ENCODE measurements at regions of chr4 and their contacts with region 1.

Region 1: GRCh38 chr4:142282870-142283431 is 563.1 kb downstream of the INPP4B start:
- DNase-seq: peak; percentile 51
- H3K4me3 ChIP-seq: no peak overlapping the region
- H3K27ac ChIP-seq: no peak overlapping the region
- H3K4me1 ChIP-seq: no peaks in the 10 kb centered on the region
- H3K27me3 ChIP-seq: no peaks in the 10 kb centered on the region
- CTCF ChIP-seq: peak; percentile 75

Region 2: DNA sequence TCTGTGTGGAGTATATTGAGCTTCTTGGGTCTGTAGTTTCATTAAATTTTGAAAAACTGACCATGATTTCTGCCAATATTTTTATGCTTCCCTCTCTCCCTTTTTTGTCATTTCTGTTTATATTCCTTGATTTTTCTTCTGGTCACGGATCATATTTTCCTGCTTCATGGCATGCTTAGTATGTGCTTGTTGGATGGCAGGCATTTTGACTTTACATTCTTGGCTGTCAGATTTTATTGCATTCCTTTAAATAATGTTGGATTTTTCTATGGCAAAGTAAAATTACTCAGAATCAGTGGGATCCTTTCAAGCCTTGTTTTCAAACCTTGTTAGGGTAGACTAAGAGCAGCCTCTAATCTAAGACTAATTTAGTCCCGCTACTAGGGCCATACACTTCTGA is 114.8 kb before region 1 on chr4:
- CTCF ChIA-PET with region 1: no interaction called
- POLR2A ChIA-PET with region 1: no interaction called
- intact Hi-C with region 1: no loop called
- DNase-seq: no peak
- H3K4me3 ChIP-seq: no peak overlapping the region
- H3K27ac ChIP-seq: no peak overlapping the region
- H3K4me1 ChIP-seq: no peaks in the 10 kb centered on the region
- H3K27me3 ChIP-seq: no peaks in the 10 kb centered on the region
- CTCF ChIP-seq: no peak

Region 3: GRCh38 chr4:142719854-142720541 is 437.0 kb after region 1 on chr4:
- CTCF ChIA-PET with region 1: no interaction called
- POLR2A ChIA-PET with region 1: no interaction called
- intact Hi-C with region 1: loop called (anchors 5 kb)
- DNase-seq: peak; percentile 48
- H3K4me3 ChIP-seq: no peak overlapping the region
- H3K27ac ChIP-seq: no peak overlapping the region
- H3K4me1 ChIP-seq: no peaks in the 10 kb centered on the region
- H3K27me3 ChIP-seq: no peaks in the 10 kb centered on the region
- CTCF ChIP-seq: peak; percentile 61

Region 4: DNA sequence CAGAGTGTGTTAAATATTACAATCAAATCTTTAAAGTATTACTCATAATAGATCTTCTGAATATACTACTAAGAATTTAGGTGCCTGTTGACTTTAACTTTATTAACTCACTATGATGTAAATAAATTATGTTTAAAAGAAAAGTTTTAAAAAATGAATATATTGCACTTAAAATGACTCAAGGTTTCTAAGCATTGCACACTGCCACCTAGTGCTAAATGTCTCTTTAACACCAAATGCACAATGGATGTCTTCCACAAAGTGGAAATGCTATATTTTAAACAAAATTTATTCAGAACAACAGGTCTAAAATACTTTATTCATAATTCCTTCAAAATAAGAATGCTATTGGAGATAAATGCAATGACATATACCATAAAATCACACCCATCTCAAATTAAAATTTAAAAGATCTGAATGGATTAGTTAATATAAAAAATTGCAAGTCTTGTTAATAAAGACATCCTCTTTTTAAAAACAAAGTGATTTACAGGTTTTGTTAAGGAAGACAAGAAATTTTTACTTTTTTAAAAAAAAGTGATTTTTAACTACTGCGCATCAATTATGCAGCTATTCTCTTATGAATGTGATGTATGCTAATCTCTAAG is 557.7 kb after region 1 on chr4:
- CTCF ChIA-PET with region 1: no interaction called
- POLR2A ChIA-PET with region 1: no interaction called
- intact Hi-C with region 1: loop called (anchors 2 kb)
- DNase-seq: peak; percentile 35
- H3K4me3 ChIP-seq: no peak overlapping the region
- H3K27ac ChIP-seq: no peak overlapping the region
- H3K4me1 ChIP-seq: no peaks in the 10 kb centered on the region
- H3K27me3 ChIP-seq: peaks cover 28% of the 10 kb centered on the region
- CTCF ChIP-seq: peak; percentile 73

Measured in A673 (cell line).